Head of caudate nucleus (tissue), 42 donors: ENCODE measurements at regions of chr16 and their contacts with region 1.

Region 1: GRCh38 chr16:3879887-3880564 is 487 bp downstream of the CREBBP start:
- DNase-seq: peak in 41 of 42 donors; percentile 36 to 89 (median 77)

Region 2: GRCh38 chr16:3690470-3690928 is 189.5 kb before region 1 on chr16:
- intact Hi-C with region 1: loop called (anchors 5 kb)
- DNase-seq: peak; percentile 84 to 97 (median 94)

Region 3: GRCh38 chr16:3761375-3762106 is 118.5 kb before region 1 on chr16:
- intact Hi-C with region 1: loop called (anchors 10 kb)
- DNase-seq: peak in 6 of 42 donors; percentile 20 to 59 (median 45)